Gastrocnemius medialis (tissue), 4 donors: ENCODE measurements at regions of chr2 and their contacts with region 1.

Region 1: DNA sequence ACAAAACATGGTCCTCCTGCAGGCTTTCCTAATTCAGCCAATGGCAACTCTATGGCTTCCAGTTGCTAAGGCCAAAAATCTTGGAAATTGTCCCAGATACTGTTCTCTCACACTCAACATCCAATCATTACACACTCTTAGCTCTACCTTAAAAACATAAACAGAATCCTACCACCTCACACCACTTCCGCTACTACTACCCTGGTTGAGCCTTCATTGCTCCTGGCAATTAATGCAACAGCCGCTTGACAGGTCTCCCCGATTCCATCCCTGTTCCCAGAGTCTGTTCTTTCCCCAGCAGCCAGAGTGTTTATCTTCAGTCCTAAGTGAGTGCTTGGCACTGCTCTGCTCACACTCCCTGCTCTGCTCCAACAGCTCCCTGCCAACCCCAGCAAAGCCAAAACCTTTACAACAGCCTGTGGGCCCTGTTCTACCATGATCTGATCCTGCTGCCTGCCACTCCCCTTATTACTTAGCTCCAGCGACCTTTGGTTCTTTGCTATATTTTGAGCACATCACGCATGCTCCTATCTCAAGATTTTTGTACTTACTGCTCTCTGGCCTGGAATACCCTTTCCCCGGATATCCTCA is 67.5 kb upstream of the AMMECR1L start:
- DNase-seq: peak in 1 of 2 donors; percentile 42
- ATAC-seq: peak in 1 of 2 donors; percentile 79
- H3K4me3 ChIP-seq: no peak overlapping the region
- H3K27ac ChIP-seq: peak overlapping the region in 3 of 4 donors; percentile 39 to 57 (median 51)
- H3K4me1 ChIP-seq: peaks cover 13 to 17% of the 10 kb centered on the region in 2 donors
- H3K27me3 ChIP-seq: no peaks in the 10 kb centered on the region
- CTCF ChIP-seq: no peak
- POLR2A ChIP-seq: no peak

Region 2: GRCh38 chr2:127770973-127771735 is 182.1 kb before region 1 on chr2:
- in situ Hi-C with region 1: no loop called
- intact Hi-C with region 1: no loop called
- DNase-seq: no peak
- ATAC-seq: no peak
- H3K4me3 ChIP-seq: no peak overlapping the region
- H3K27ac ChIP-seq: no peak overlapping the region
- H3K4me1 ChIP-seq: peaks cover 21 to 23% of the 10 kb centered on the region in 2 donors
- H3K27me3 ChIP-seq: no peaks in the 10 kb centered on the region
- CTCF ChIP-seq: no peak
- POLR2A ChIP-seq: no peak

Region 3: DNA sequence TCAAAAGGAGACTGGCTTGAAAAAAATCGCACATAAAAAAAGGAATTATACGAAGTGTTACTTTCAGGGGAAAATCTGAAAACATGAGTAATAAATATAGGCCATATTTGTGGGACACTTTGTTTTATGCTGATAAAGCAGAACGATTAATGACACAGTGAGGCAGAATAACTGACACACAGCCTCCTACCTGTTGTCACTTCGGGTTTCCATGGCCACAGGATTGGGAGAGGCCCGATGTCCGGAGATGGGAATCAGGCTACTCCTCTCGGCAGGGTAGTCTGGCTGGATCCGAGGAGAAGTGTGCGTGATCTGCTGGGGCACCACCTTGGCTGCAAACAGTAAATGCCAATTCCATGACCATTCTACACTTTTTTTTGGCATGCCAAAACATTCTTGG is 42.9 kb after region 1 on chr2:
- in situ Hi-C with region 1: no loop called
- intact Hi-C with region 1: loop called (anchors 5 kb)
- DNase-seq: no peak
- ATAC-seq: peak; percentile 37 to 56
- H3K4me3 ChIP-seq: no peak overlapping the region
- H3K27ac ChIP-seq: peak overlapping the region; percentile 6 to 65 (median 58)
- H3K4me1 ChIP-seq: peaks cover 0 to 5% of the 10 kb centered on the region in 2 donors
- H3K27me3 ChIP-seq: no peaks in the 10 kb centered on the region
- CTCF ChIP-seq: no peak
- POLR2A ChIP-seq: no peak